ENCODE measurements at regions of chr10 and their contacts with region 1.

Region 1: DNA sequence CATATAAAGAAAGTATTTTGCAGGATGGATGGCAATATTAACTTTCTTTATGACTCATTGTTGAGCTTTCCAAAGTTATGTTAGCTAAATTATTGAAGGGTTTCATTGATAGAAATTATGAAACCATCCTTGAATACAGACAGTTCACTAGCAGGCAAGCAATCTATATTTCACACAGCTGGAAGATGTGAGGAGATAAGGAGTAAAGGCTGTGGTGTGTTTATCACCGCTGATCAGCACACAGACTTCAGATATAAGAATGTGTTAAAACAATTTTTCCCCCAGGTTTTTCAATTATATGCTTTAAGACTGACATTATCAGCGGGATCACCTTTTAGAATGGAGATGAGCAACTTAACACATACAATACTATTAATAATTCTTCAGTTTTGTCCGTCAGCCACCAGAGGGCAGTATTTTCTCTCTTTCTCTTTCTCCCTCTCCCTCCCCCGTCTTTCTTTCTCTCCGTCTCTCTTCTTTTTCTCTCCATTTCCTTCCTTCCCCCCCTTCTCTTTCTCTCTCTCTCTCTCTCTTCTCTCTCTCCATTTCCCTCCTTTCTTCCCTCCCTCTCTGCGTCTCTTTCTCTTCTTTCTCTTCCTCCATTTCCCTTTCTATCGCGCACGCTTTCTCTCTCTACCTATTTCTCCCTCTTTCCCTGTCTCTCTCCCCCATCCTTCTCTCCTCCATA is 62.9 kb upstream of the FAM171A1 start:
- DNase-seq: no peak
- H3K4me3 ChIP-seq: peak overlapping the region; percentile 11 to 29
- H3K27ac ChIP-seq: no peak overlapping the region
- H3K4me1 ChIP-seq: peaks cover 3% of the 10 kb centered on the region
- H3K27me3 ChIP-seq: no peaks in the 10 kb centered on the region
- CTCF ChIP-seq: peak; percentile 50 to 77 (median 72)
- POLR2A ChIP-seq: no peak

Region 2: DNA sequence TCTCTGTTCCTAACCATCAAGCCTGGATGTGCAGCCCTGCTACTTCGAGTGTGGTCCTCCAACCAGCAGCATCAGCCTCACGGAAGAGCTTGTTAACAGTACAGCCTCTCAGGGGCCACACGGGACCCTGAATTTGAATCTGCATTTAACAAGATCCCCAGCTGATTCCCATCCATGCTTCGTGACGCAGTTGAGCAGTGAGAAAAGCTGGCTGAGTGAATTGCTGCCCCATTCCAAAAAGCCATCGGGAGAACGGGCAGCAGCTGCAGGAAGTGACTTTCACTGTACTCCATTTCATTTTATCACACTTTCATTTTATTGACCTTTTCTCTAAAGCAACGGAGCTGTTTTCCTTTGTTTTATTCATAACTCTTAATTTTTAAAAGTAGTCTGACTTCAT is 85.4 kb before region 1 on chr10:
- intact Hi-C with region 1: no loop called
- DNase-seq: no peak
- H3K4me3 ChIP-seq: peak overlapping the region; percentile 26 to 43
- H3K27ac ChIP-seq: no peak overlapping the region
- H3K4me1 ChIP-seq: peaks cover 27% of the 10 kb centered on the region
- H3K27me3 ChIP-seq: no peaks in the 10 kb centered on the region
- CTCF ChIP-seq: no peak
- POLR2A ChIP-seq: no peak

Region 3: GRCh38 chr10:15719899-15720634 is 286.1 kb after region 1 on chr10 and contains the start of gene ITGA8:
- intact Hi-C with region 1: loop called (anchors 5 kb)
- DNase-seq: no peak
- H3K4me3 ChIP-seq: peak within 1 kb of the TSS; percentile 52 to 60
- H3K27ac ChIP-seq: peak within 1 kb of the TSS; percentile 66
- H3K4me1 ChIP-seq: no peaks in the 10 kb centered on the region
- H3K27me3 ChIP-seq: no peaks in the 10 kb centered on the region
- CTCF ChIP-seq: peak in 2 of 3 experiments; percentile 25 to 34
- POLR2A ChIP-seq: no peak
- total RNA-seq, gene ITGA8: 15.5 TPM

Region 4: DNA sequence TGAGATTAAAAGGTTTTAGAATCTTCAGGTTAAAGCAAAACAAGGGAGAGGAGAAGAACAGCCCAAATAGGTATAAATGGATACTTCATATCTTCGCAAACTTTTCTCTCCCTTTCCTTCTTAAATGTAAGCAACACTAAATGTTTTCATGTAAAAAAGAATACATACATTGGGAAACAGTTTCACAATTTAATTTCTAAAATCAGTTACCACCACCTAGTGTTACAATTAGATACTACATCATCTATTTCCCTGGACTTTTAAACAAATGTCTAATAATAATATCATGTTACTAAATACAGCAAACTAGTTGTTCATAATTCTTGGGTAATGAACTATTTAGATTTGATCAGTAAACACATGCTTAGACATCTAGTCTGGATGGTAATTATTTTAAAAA is 390.5 kb after region 1 on chr10:
- intact Hi-C with region 1: loop called (anchors 10 kb)
- DNase-seq: no peak
- H3K4me3 ChIP-seq: no peak overlapping the region
- H3K27ac ChIP-seq: no peak overlapping the region
- H3K4me1 ChIP-seq: no peaks in the 10 kb centered on the region
- H3K27me3 ChIP-seq: no peaks in the 10 kb centered on the region
- CTCF ChIP-seq: peak; percentile 27 to 38 (median 33)
- POLR2A ChIP-seq: no peak